ENCODE measurements at regions of chr14 and their contacts with region 1.

Region 1: GRCh38 chr14:32382704-32383103 is 53.6 kb downstream of the AKAP6 start:
- DNase-seq: no peak
- H3K4me3 ChIP-seq: no peak overlapping the region
- CTCF ChIP-seq: peak; percentile 67

Region 2: DNA sequence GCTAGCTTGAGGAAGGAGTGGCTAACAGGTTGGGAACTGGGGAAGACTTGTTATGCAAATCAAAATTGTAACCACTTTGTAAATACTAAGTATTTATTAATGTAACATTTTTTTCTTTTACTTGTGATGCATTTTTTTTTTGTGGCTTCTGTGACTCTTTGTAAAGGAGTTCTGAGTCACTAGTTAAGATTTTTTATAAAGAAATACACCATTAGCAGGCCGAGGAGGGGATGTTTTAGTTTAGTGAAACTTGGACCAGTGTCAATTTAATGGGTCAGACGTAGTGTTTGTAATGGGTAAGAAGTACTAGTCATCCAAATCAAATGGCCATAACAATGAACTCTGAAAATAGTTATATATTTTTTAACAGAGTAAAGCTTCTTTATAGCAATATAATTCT is 10.6 kb before region 1 on chr14:
- CTCF ChIA-PET with region 1: interaction called, 15 read pairs
- POLR2A ChIA-PET with region 1: no interaction called
- DNase-seq: peak; percentile 92
- H3K4me3 ChIP-seq: no peak overlapping the region
- CTCF ChIP-seq: no peak

Region 3: DNA sequence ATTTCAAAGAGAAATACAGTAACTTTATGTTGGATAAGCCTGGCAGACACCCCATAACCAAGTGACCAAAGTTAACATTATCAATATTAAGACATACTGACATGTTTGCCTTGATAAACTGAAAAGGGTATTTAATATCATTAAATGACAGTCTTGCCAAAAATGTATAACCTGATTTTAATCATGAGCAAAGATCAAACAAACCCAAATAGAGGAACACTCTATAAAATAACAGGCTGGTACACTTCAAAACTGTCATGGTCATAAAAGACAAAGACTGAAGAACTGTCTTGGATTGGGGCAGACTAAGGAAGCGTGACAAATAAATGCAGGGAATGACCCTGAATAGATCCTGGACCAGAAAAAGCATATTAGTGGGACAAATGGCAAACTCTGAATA is 10.4 kb after region 1 on chr14:
- CTCF ChIA-PET with region 1: interaction called, 12 read pairs
- POLR2A ChIA-PET with region 1: no interaction called
- DNase-seq: no peak
- H3K4me3 ChIP-seq: no peak overlapping the region
- CTCF ChIP-seq: no peak

Region 4: DNA sequence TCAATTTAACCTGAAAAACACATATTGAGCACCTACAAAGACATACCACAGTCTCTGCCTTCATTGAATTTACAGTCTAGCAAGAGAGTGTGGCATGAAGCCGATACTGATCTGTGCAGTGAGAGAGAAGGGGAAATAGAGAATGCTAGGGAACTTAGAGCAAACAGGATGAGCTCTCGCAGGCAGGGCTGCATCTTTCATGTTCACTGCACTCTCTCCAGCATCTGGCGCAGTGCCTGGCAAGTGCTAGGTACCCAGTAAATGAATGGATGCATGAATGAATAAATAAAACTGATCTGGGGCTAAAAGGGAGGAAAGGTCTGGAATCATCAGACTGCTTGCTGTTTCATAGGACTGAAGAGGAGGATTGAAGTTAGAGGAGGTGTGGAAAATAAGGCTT is 299.5 kb after region 1 on chr14:
- CTCF ChIA-PET with region 1: no interaction called
- POLR2A ChIA-PET with region 1: no interaction called
- DNase-seq: no peak
- H3K4me3 ChIP-seq: no peak overlapping the region
- CTCF ChIP-seq: no peak

Measured in AG04449 (cell line).